Dorsolateral prefrontal cortex (tissue), 120 donors: ENCODE measurements at regions of chr2 and their contacts with region 1.

Region 1: DNA sequence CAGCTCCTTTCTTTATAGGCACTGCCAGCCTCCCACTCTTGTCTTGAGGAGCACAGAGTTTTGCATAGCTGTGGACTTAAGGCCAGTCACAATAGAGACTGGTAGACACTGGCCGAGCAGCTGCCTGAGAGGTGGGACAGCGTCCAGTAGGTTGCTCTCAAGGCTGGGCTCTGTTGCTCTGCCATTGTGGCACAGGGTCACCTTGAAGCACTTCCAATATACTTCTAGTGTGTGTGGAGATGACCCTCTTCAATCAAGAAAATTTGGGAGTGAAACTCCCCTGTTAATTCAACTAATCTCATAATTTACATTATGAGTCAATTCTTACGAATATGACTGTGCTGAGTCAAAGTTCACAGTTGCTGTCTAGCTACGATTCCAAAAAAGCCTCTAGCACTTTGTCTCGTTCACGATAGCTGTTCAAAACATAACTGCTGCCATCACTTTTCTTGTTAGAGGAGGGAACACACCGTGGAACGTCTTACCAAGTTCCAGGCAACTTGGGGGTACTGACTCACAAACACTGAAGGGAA is 636.2 kb downstream of the EPHA4 start:
- DNase-seq: no peak
- H3K4me3 ChIP-seq: no peak overlapping the region
- H3K27ac ChIP-seq: no peak overlapping the region
- H3K27me3 ChIP-seq: peaks cover 0 to 4% (median 0%) of the 10 kb centered on the region in 45 donors
- CTCF ChIP-seq: no peak

Region 2: DNA sequence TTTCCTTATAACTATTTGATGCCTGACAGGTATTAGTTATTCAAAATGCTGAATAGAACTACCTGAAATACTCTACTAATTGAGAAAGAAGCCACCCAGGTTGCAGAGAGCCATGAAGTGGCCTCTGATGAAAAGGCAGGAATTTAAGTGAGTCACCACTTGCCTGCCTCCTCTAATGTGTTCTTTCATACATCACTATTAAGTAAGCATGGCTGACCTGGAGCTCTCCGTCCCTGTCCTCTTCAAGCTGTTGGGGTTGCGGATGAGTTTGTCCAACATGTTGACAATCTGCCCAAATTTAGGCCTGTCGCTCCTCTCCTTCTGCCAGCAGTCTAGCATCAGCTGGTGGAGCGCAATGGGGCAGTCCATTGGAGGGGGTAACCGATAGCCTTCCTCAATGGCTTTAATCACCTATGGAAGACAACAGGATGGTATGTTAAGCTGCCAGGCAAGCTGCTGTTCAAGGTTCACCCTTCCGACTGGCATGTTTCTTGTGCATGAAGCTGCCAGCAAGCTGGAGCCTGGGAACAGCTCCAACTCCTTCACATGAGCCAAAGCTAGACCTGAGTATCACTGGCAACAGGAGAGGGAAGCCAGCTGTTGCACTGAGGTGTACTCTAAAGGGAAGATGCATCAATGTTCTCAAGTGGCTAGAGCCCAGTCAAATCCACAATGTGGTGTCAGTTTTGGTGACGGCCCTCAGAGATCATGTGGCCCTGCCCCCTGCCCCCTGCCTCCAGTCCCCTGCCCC is 494.1 kb after region 1 on chr2:
- intact Hi-C with region 1: loop called in 1 of 2 experiments (anchors 10 kb)
- DNase-seq: peak in 6 of 10 donors; percentile 19 to 56 (median 36)
- H3K4me3 ChIP-seq: no peak overlapping the region
- H3K27ac ChIP-seq: no peak overlapping the region
- H3K27me3 ChIP-seq: no peaks in the 10 kb centered on the region
- CTCF ChIP-seq: no peak